CD14-positive monocyte (primary cell): ENCODE measurements at regions of chr7 and their contacts with region 1.

Region 1: DNA sequence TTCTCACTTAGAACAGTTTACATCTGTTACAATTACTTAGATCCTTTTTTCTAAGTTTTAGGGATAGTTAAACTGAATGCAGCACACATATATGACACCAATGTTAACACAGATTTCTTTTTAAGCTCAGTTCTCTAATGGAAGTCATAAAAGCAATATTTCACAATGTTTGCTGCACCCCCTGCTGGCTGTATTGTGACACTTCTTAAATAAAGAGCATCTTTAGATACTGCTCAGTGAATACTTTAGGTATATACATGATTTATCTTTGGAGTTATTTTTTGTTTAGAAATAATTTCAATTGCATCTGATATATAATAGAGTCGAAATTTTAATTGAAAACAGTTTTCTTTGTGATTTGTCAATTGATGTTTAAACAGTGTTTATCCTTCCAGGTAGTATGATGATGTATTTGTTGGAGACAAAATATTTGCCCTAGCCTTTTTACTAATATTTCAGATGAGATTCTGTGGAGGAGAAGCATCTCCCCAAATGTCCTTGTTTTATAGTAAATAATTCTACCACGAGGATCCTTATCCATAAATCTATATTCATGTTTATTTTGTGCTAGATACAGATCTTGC is 174.4 kb downstream of the ST7 start:
- DNase-seq: peak; percentile 44 to 74 (median 53)
- H3K4me3 ChIP-seq: no peak overlapping the region
- H3K4me3 Mint-ChIP-seq: no peak overlapping the region
- H3K27ac ChIP-seq: no peak overlapping the region
- H3K27ac Mint-ChIP-seq: no peak overlapping the region
- H3K4me1 ChIP-seq: peaks cover 8 to 10% of the 10 kb centered on the region in 2 donors
- H3K4me1 Mint-ChIP-seq: peaks cover 10% of the 10 kb centered on the region
- H3K27me3 ChIP-seq: no peaks in the 10 kb centered on the region
- H3K27me3 Mint-ChIP-seq: no peaks in the 10 kb centered on the region
- CTCF ChIP-seq: peak; percentile 96

Region 2: DNA sequence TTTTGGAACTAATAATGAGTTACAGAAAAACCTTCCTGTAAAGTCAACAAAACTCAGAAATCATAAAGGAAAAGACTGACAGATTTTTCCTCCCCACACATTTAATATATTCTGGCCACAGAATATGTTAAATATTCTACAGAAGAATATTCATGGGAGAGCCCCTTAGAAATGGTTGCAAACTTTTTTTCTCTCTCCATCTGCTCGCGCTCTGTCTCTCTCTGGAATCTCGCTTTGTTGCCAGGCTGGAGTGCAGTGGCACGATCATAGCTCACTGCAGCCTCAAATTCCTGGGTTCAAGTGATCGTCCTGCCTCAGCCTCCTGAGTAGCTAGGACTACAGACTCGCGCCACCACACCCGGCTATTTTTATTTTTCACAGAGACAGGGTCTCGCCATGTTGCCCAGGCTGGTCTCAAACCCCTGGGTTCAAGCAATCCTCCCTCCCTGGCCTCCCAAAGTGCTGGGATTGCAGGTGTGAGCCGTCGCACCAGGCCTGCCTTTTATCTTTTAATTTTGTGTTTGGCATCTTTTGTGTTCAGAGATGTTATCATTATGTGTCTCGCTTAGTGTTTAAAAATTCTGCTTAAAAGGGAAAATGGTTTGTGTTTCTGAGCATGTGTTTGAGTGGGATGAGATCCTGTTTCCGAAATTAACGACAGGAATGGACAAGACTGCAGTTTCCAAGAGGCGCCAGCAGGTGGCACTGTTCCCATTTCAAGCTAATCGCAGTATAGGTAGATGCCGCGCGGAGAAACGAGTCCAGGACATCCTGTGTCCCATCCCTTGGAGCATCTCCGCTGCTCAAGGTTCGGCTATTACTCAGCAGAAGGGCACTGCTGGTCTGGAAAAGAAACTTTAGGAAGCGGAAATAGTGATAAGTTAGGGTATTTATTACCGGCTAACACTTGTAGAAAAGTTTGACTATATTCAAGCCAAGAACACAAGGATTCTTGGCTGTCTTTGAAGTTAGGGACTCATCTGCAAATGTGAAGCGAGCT is 197.5 kb before region 1 on chr7:
- intact Hi-C with region 1: loop called in 1 of 2 experiments (anchors 5 kb)
- DNase-seq: peak; percentile 61 to 80 (median 68)
- H3K4me3 ChIP-seq: no peak overlapping the region
- H3K4me3 Mint-ChIP-seq: no peak overlapping the region
- H3K27ac ChIP-seq: no peak overlapping the region
- H3K27ac Mint-ChIP-seq: peak overlapping the region in 1 of 7 donors; percentile 7
- H3K4me1 ChIP-seq: no peaks in the 10 kb centered on the region
- H3K4me1 Mint-ChIP-seq: peaks cover 8% of the 10 kb centered on the region
- H3K27me3 ChIP-seq: no peaks in the 10 kb centered on the region
- H3K27me3 Mint-ChIP-seq: peaks cover 0 to 8% (median 2%) of the 10 kb centered on the region in 3 donors
- CTCF ChIP-seq: peak; percentile 96